ENCODE measurements at regions of chr18 and their contacts with region 1.

Region 1: DNA sequence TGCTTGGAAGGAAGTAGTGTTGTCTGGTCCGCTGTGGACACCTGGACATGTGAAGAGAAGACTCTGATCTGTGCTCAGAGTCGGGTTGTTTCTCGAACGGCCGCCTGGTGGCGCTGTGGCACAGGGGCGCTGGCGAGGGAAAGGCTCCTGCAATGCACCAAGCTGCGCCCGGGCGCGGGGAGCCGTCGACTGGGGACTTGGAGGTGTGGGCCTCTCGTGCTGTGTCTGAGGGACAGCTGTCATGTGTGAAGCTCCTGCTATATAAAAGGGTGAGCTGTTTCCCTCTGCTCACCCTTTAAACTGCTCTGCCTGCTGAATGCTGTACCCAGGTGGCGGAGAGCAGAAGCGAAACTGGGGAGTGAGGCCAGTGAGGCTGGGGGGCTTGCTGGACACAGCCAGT is 44.0 kb downstream of the GNAL start:
- DNase-seq: peak; percentile 92
- H3K4me3 Mint-ChIP-seq: peak overlapping the region; percentile 44
- H3K27ac Mint-ChIP-seq: no peak overlapping the region
- H3K4me1 Mint-ChIP-seq: peaks cover 4% of the 10 kb centered on the region
- H3K27me3 Mint-ChIP-seq: peaks cover 25% of the 10 kb centered on the region

Region 2: DNA sequence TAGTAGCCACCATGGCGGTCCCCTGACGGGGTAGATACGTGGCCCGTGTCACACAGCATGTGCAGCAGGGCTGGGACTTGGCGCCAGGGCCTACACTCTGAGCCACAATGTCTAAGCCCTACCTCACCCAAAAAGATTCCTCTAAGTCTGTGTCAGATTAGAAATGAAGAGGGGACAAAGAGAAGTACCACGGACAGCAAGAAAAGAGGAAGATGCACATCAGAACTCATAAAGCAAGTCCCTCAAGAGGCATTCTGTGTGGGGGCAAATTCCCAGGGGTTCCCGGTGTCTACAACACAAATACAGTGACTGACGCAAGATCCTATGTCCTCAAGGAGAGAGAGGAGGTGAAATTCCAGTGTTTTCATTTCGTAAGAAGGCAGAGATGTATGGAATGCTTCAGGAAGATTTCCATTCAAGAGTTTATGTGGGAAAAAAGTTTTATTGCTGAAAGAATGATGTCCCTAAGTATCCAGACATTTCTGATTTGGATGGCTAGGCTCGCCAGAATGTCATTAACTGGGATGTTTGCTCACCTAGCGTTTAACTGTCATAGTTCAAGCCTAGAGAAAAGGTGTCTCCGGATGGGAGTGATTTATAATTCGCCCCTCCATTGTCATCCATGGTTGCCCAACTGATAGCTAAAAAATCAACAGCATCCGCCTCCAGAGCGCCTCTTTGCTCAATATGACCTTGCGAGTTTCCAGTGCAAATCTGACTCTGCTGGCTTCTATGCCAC is 42.6 kb after region 1 on chr18:
- intact Hi-C with region 1: no loop called
- DNase-seq: no peak
- H3K4me3 Mint-ChIP-seq: no peak overlapping the region
- H3K27ac Mint-ChIP-seq: no peak overlapping the region
- H3K4me1 Mint-ChIP-seq: no peaks in the 10 kb centered on the region
- H3K27me3 Mint-ChIP-seq: peaks cover 10% of the 10 kb centered on the region

Region 3: GRCh38 chr18:11872479-11873136 is 139.6 kb after region 1 on chr18:
- intact Hi-C with region 1: loop called (anchors 2 kb)
- DNase-seq: no peak
- H3K4me3 Mint-ChIP-seq: no peak overlapping the region
- H3K27ac Mint-ChIP-seq: no peak overlapping the region
- H3K4me1 Mint-ChIP-seq: peaks cover 2% of the 10 kb centered on the region
- H3K27me3 Mint-ChIP-seq: peaks cover 2% of the 10 kb centered on the region

Region 4: DNA sequence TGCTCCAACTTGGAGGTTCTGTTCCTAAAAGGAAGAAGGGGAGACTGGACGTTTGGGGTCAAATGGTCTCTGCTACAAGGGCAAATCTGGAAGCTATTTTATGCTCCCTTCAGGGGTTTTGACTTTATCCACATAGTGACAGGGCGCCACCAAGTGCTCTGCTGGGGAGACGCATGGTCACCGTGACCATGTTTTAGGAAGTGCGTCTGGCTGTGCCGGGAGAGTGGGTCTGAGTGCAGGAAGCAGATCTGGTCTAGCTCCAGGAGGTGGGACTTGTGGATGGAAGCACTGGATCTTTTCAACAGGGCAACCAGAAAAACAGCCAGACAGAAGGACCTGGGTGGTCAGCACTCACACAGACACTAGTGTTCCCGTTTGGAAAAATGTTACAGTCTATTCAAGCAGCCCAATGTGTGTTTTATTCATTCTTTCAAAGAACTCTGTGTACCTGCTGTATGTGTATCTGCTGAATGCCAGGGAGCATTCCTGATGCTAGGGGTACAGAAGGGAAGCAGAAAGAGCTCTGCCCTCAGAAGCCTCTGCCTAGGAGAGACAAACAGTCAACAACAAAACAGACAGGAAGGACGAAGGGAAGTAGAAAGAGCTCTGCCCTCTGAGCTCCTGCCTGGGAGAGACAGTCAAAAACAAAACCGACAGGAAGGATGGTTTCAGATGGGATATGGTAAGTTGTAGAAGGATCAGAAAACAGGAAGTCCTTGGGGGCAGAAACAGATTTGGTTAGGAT is 262.6 kb after region 1 on chr18:
- intact Hi-C with region 1: loop called (anchors 2 kb)
- DNase-seq: peak; percentile 87
- H3K4me3 Mint-ChIP-seq: peak overlapping the region; percentile 53
- H3K27ac Mint-ChIP-seq: peak overlapping the region; percentile 60
- H3K4me1 Mint-ChIP-seq: peaks cover 19% of the 10 kb centered on the region
- H3K27me3 Mint-ChIP-seq: no peaks in the 10 kb centered on the region

Region 5: DNA sequence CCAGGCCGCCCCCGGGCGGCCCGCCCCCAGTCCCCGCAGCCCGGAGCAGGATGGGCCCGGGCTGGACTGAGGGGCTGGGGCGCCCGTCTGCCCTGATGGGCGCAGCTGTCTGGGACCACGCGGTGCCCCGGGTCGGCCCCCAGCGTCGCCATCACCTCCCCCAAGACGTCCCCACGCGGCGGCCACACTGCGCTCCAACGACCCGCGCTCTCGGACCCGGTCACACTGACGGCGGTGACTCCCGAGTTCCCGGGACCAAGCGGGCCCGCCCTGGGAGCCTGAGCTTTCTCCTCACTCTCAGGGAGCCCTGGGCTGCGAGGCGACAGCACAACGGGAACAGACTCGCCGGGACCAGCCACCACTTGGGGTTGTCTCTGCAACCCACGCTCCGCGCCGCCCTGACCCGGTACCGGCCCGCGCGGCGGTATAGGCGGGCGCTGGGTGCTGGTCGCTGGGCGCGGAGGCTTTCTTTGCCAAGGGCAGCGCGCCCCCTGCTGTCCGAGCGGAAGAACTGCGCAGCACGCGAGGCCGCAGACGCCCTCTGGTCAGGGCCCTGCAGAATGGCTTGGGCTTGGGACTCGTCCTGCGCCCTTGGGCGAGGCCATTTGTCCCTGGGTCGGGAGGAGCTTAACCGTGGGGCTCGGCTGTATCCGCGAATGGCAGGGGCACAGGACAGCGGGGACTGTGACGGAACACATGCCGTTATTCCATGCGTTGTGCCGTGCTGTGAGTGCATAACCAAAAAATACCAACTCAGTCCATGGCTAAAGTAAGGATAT is 305.8 kb after region 1 on chr18:
- intact Hi-C with region 1: loop called (anchors 1 kb)
- DNase-seq: peak; percentile 94
- H3K4me3 Mint-ChIP-seq: peak overlapping the region; percentile 82
- H3K27ac Mint-ChIP-seq: peak overlapping the region; percentile 41
- H3K4me1 Mint-ChIP-seq: peaks cover 17% of the 10 kb centered on the region
- H3K27me3 Mint-ChIP-seq: peaks cover 9% of the 10 kb centered on the region